Activated naive CD4-positive, alpha-beta T cell treated with anti-CD3 and anti-CD28 coated beads, Interleukin-2, amount 10 ng/mL, durations not matched to agents 7 days and 5 days (primary cell): ENCODE measurements at regions of chr20 and their contacts with region 1.

Region 1: GRCh38 chr20:34312544-34313217 is 9.5 kb upstream of the AHCY start:
- DNase-seq: peak; percentile 92
- H3K4me3 Mint-ChIP-seq: no peak overlapping the region
- H3K27ac Mint-ChIP-seq: no peak overlapping the region
- H3K4me1 Mint-ChIP-seq: peaks cover 13% of the 10 kb centered on the region
- H3K27me3 Mint-ChIP-seq: peaks cover 52% of the 10 kb centered on the region

Region 2: DNA sequence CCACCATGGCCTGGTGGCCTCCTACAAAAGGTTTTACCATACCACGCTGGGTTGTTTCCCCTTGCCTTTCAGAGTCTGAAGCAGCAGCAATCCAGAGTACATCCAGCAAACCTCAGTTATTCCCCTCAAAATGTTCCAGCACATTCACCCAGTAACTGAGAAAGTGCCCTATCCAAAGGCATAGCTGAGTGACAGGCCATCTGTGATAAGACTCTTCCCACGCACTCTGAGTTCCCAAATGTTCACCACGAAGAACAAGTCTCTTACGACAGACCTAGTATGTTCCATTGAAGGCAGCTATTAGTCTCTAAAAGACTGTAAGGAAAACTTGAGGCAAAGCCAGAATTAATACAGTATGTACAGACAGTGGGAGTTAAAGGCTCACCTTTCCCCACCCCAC is 682.2 kb before region 1 on chr20:
- CTCF ChIA-PET with region 1: no interaction called
- DNase-seq: no peak
- H3K4me3 Mint-ChIP-seq: no peak overlapping the region
- H3K27ac Mint-ChIP-seq: no peak overlapping the region
- H3K4me1 Mint-ChIP-seq: peaks cover 5% of the 10 kb centered on the region
- H3K27me3 Mint-ChIP-seq: no peaks in the 10 kb centered on the region

Region 3: DNA sequence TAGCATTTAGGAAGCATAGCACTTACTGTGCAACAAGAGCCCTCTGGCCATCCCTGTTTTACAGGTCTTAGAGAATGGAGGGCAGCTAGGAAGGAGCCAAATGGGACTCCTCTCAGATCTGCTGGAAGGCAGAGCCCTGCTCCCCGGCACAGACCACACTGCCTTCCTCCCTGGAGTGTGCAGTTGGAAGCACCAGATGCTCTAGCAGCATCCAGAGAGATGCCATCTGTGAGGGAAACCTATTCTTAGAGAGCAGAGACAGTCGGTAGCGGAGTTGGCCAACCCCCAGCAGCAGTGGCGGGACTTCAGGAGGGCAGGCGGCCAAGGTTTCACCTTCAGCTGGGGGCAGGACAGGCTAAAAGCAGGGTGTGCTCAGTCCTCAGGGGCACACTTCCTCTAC is 609.8 kb before region 1 on chr20:
- CTCF ChIA-PET with region 1: no interaction called
- DNase-seq: no peak
- H3K4me3 Mint-ChIP-seq: no peak overlapping the region
- H3K27ac Mint-ChIP-seq: no peak overlapping the region
- H3K4me1 Mint-ChIP-seq: no peaks in the 10 kb centered on the region
- H3K27me3 Mint-ChIP-seq: peaks cover 3% of the 10 kb centered on the region

Region 4: GRCh38 chr20:34363062-34363464 is 50.4 kb after region 1 on chr20 and contains the start of gene ITCH:
- CTCF ChIA-PET with region 1: interaction called, 13 read pairs
- DNase-seq: peak; percentile 95
- H3K4me3 Mint-ChIP-seq: peak within 1 kb of the TSS; percentile 97
- H3K27ac Mint-ChIP-seq: peak within 1 kb of the TSS; percentile 97
- H3K4me1 Mint-ChIP-seq: peaks cover 47% of the 10 kb centered on the region
- H3K27me3 Mint-ChIP-seq: peaks cover 9% of the 10 kb centered on the region

Region 5: DNA sequence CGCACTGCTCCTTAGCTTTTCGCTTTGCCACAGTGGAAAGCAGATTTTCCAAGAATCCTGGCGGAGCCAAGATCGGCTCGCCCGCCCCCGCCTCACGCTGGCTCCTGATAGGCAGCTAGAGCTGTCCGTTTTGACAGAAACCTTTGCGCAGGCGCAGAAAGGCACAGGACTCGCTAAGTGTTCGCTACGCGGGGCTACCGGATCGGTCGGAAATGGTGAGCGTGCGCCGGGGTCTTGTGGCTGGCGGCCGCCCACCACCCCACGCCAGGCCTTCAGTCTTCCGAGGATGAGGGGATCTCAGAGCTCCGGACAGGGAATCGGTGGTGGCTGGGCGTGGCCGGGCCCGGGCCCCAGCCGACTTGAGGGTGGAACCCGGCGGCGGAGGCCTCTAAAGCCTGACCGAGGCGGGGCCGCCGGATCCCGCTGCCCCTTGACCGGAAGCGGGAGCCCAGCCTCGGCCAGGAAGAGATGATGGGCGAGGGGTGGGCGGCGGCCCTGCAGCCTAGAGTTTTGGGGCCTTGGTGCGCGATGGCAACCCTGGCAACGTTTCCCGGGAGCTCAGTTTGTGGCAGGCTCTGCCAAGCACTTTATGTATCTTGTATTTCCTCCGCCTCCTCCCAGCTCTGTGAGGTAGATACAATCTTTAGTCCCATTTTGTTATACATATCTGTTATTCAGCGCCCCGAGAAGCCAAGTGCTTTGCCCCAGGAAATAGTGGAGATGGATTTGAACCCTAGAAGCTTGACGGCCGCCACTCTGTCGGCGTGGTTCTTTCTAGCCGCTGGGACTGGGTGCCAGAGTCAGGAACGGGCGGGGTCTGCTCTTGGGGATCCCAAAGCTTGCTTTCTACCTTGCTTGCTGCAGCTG is 203.8 kb after region 1 on chr20 and contains the start of gene DYNLRB1:
- CTCF ChIA-PET with region 1: interaction called, 142 read pairs
- DNase-seq: peak; percentile 97
- H3K4me3 Mint-ChIP-seq: peak within 1 kb of the TSS; percentile 94
- H3K27ac Mint-ChIP-seq: peak within 1 kb of the TSS; percentile 98
- H3K4me1 Mint-ChIP-seq: peaks cover 28% of the 10 kb centered on the region
- H3K27me3 Mint-ChIP-seq: peaks cover 4% of the 10 kb centered on the region

Region 6: GRCh38 chr20:34544109-34544793 is 231.6 kb after region 1 on chr20:
- CTCF ChIA-PET with region 1: interaction called, 25 read pairs
- DNase-seq: peak; percentile 32
- H3K4me3 Mint-ChIP-seq: peak overlapping the region; percentile 25
- H3K27ac Mint-ChIP-seq: no peak overlapping the region
- H3K4me1 Mint-ChIP-seq: peaks cover 21% of the 10 kb centered on the region
- H3K27me3 Mint-ChIP-seq: peaks cover 5% of the 10 kb centered on the region

Region 7: GRCh38 chr20:34720266-34720665 is 407.6 kb after region 1 on chr20:
- CTCF ChIA-PET with region 1: interaction called, 10 read pairs
- DNase-seq: no peak
- H3K4me3 Mint-ChIP-seq: no peak overlapping the region
- H3K27ac Mint-ChIP-seq: no peak overlapping the region
- H3K4me1 Mint-ChIP-seq: peaks cover 4% of the 10 kb centered on the region
- H3K27me3 Mint-ChIP-seq: no peaks in the 10 kb centered on the region